CD8-positive, alpha-beta T cell (primary cell): ENCODE measurements at regions of chr1 and their contacts with region 1.

Region 1: GRCh38 chr1:86913896-86914634 is at the start of gene SELENOF:
- DNase-seq: peak; percentile 97 to 100 (median 99)
- ATAC-seq: peak; percentile 85
- H3K4me3 ChIP-seq: peak within 1 kb of the TSS; percentile 91 to 99
- H3K4me3 Mint-ChIP-seq: no peak within 1 kb of the TSS
- H3K27ac ChIP-seq: peak within 1 kb of the TSS; percentile 76 to 99
- H3K27ac Mint-ChIP-seq: no peak within 1 kb of the TSS
- H3K4me1 ChIP-seq: peaks cover 35% of the 10 kb centered on the region
- H3K4me1 Mint-ChIP-seq: peaks cover 50% of the 10 kb centered on the region
- H3K27me3 ChIP-seq: no peaks in the 10 kb centered on the region
- H3K27me3 Mint-ChIP-seq: no peaks in the 10 kb centered on the region
- CTCF ChIP-seq: no peak
- total RNA-seq, gene SELENOF: 74.5 to 78.6 TPM

Region 2: DNA sequence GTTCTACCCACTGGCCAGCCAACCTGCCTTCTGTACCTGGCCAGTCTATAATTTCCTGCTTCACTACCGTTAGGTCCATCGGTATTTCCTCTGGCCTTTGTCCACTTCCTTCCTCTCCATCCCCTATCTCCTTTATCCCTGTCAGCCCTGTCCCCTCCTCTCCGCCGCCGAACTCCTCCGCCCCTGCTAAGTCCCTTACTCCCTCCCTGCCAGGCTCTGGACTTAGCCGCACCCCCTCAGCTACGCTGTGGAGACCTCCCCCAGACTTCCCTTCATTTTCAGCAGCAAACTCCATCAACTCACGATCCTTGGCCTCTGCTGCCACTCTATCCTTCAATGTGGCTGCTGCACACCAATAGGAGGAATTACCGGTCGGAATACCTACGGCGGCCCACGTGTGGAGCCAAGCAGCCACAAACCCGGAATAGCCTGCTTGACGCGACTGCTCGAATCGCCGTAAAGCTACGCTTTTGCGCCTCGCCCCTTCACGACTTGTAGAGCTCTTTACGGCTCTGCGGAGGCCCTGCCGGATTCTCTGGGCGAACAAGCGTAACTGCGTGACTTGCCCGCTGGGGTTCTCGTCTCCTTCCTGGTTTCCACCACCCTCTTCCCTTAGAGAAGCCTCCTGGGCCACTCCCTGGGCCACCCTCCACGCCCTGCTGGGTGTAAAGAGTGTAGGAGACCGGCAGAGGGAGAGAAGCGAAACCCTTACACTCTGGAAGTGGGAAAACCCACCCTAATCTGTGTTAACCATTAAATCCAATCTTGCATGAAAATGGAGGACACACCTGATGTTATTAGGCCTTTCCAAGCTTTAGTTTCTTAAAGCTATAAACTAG is 1205.9 kb before region 1 on chr1 and contains the start of gene ZNHIT6:
- CTCF ChIA-PET with region 1: no interaction called
- POLR2A ChIA-PET with region 1: no interaction called
- intact Hi-C with region 1: loop called (anchors 2 to 5 kb)
- DNase-seq: peak; percentile 72 to 95 (median 84)
- ATAC-seq: peak; percentile 95
- H3K4me3 ChIP-seq: peak within 1 kb of the TSS; percentile 89 to 93
- H3K4me3 Mint-ChIP-seq: no peak within 1 kb of the TSS
- H3K27ac ChIP-seq: peak within 1 kb of the TSS; percentile 67 to 79
- H3K27ac Mint-ChIP-seq: no peak within 1 kb of the TSS
- H3K4me1 ChIP-seq: peaks cover 17% of the 10 kb centered on the region
- H3K4me1 Mint-ChIP-seq: peaks cover 30% of the 10 kb centered on the region
- H3K27me3 ChIP-seq: no peaks in the 10 kb centered on the region
- H3K27me3 Mint-ChIP-seq: no peaks in the 10 kb centered on the region
- CTCF ChIP-seq: no peak
- total RNA-seq, gene ZNHIT6: 14.4 to 15.3 TPM

Region 3: DNA sequence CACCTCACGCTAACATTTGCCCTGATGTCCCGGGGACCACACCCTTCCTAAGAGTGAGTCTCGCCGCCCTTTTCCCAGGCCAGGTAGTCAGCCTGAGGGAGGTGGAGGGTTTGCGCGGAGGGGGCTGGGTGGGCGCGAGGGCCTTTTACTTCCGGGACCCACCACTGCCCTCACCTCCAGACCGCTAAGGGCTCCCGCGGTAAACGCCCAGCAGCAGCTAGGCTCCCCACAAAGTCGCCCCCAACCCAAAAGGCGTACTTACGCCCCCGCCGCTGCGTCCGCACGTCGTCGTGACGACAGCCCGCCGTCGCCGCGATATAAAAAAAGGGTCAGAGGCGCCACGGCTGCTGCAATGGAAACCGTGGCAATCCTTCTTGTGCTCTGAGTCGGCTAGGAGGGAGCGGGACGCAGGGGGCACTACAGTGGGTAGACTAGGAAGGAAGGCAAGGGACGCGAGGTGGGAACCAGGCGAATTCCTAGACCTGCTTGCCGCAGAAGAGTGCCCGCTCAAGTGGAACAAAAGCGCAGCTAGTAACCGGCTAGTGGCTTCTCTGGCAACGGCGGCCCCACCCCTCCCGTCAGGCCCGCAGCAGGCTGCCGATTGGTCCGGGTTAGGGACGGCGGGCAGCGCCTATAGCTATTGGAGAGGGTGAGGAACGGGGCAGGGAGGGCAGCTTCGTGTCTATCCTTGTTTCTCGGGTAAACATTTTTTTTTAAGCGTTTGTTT is 518.1 kb before region 1 on chr1 and contains the start of gene ODF2L:
- CTCF ChIA-PET with region 1: no interaction called
- POLR2A ChIA-PET with region 1: interaction called, 7 read pairs
- intact Hi-C with region 1: loop called (anchors 1 kb)
- DNase-seq: peak; percentile 74 to 91 (median 89)
- ATAC-seq: peak; percentile 98
- H3K4me3 ChIP-seq: peak within 1 kb of the TSS; percentile 91 to 97
- H3K4me3 Mint-ChIP-seq: peak within 1 kb of the TSS; percentile 99
- H3K27ac ChIP-seq: peak within 1 kb of the TSS; percentile 85 to 91
- H3K27ac Mint-ChIP-seq: peak within 1 kb of the TSS; percentile 97
- H3K4me1 ChIP-seq: peaks cover 16% of the 10 kb centered on the region
- H3K4me1 Mint-ChIP-seq: peaks cover 53% of the 10 kb centered on the region
- H3K27me3 ChIP-seq: no peaks in the 10 kb centered on the region
- H3K27me3 Mint-ChIP-seq: no peaks in the 10 kb centered on the region
- CTCF ChIP-seq: no peak
- total RNA-seq, gene ODF2L: 49.3 to 49.6 TPM

Region 4: DNA sequence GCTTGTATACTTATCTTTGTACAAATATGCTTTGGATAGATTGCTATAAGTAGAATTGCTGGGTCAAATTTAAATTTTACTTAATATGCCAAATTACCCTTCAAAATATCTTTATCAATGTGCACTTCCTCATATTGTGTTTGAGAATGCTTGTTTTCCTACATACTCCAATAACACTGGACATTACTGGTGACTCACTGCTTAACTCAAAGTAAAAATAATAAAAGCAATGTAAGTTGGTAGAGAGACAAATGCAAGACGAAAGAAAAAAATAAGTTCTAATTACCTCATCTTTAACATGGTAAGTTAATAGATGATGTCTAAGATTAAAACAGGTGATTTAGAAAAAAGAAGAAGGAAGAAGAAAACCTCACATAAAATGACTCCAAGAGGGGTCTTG is 217.5 kb before region 1 on chr1:
- CTCF ChIA-PET with region 1: no interaction called
- POLR2A ChIA-PET with region 1: no interaction called
- intact Hi-C with region 1: no loop called
- DNase-seq: no peak
- ATAC-seq: no peak
- H3K4me3 ChIP-seq: no peak overlapping the region
- H3K4me3 Mint-ChIP-seq: no peak overlapping the region
- H3K27ac ChIP-seq: no peak overlapping the region
- H3K27ac Mint-ChIP-seq: no peak overlapping the region
- H3K4me1 ChIP-seq: no peaks in the 10 kb centered on the region
- H3K4me1 Mint-ChIP-seq: peaks cover 2% of the 10 kb centered on the region
- H3K27me3 ChIP-seq: no peaks in the 10 kb centered on the region
- H3K27me3 Mint-ChIP-seq: no peaks in the 10 kb centered on the region
- CTCF ChIP-seq: no peak

Region 5: GRCh38 chr1:86833461-86834215 is 80.4 kb before region 1 on chr1:
- CTCF ChIA-PET with region 1: interaction called, 6 read pairs
- POLR2A ChIA-PET with region 1: no interaction called
- intact Hi-C with region 1: loop called in 1 of 2 experiments (anchors 5 kb)
- DNase-seq: peak; percentile 4 to 76 (median 53)
- ATAC-seq: peak; percentile 72
- H3K4me3 ChIP-seq: no peak overlapping the region
- H3K4me3 Mint-ChIP-seq: no peak overlapping the region
- H3K27ac ChIP-seq: no peak overlapping the region
- H3K27ac Mint-ChIP-seq: no peak overlapping the region
- H3K4me1 ChIP-seq: no peaks in the 10 kb centered on the region
- H3K4me1 Mint-ChIP-seq: peaks cover 4% of the 10 kb centered on the region
- H3K27me3 ChIP-seq: no peaks in the 10 kb centered on the region
- H3K27me3 Mint-ChIP-seq: no peaks in the 10 kb centered on the region
- CTCF ChIP-seq: peak; percentile 64

Region 6: DNA sequence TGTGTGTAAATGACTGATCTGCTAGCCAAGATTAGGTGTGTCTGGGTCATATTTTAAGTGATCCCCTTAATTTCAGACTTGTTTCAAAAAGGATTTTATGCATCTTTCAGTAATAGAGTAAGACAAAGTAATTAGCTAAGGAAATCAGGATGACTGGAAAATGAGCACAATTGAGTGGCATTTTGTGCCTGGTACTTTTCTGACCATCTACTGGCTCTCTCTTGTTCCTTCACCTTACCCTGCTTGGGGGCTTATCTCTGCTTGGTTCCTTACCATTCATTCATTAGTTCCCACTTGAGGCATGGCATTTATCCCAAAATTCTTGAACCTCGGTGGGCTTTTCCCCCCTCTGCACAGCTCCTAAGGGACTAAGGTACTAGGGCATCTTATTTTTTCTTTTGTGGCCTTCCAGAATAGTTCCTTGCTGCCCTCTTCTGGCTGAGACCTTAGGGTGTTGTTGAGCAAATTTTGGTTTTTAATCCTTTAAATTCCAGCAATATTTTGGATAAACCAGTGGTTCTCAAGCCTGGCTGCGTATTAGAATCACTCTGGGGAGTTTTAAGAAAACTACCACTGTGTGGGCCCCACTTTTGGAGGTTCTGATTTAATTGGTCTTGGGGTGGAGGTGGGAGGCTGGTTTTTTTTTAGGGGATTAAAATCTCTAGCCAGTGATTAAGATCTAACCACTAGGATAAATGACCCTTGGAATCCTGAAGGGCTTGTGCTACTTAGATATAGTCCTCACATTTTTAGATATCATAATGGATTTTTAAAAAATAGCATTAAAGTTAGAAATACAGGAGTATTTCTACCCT is 51.2 kb after region 1 on chr1:
- CTCF ChIA-PET with region 1: interaction called, 6 read pairs
- POLR2A ChIA-PET with region 1: no interaction called
- intact Hi-C with region 1: loop called in 1 of 2 experiments (anchors 5 kb)
- DNase-seq: peak in 4 of 9 experiments; percentile 13 to 53 (median 31)
- ATAC-seq: no peak
- H3K4me3 ChIP-seq: no peak overlapping the region
- H3K4me3 Mint-ChIP-seq: no peak overlapping the region
- H3K27ac ChIP-seq: no peak overlapping the region
- H3K27ac Mint-ChIP-seq: no peak overlapping the region
- H3K4me1 ChIP-seq: no peaks in the 10 kb centered on the region
- H3K4me1 Mint-ChIP-seq: no peaks in the 10 kb centered on the region
- H3K27me3 ChIP-seq: no peaks in the 10 kb centered on the region
- H3K27me3 Mint-ChIP-seq: no peaks in the 10 kb centered on the region
- CTCF ChIP-seq: peak; percentile 52

Region 7: DNA sequence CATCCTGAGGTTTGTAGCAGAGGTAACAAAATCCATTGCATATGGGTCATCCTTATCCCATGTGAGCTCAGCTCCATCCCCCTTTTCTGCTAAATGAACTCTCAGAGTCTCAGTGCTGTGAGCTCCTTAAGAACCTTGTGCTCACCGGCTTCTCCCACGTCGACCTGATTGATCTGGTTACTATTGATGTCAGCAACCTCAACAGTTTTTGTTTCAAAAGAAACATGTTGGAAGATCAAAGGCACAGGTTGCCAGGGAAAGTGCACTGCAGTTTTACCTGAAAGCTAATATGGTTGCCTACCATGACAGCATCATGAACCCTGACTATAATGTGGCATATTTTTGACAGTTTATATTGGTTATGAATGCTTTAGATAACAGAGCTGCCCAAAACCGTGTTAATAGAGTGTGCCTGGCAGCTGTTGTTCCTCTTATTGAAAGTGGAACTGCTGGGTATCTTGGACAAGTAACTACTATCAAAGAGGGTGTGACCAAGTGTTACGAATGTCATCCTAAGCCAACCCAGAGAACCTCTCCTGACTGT is 131.8 kb after region 1 on chr1:
- CTCF ChIA-PET with region 1: no interaction called
- POLR2A ChIA-PET with region 1: no interaction called
- intact Hi-C with region 1: loop called (anchors 1 to 5 kb)
- DNase-seq: peak in 7 of 9 experiments; percentile 1 to 85 (median 56)
- ATAC-seq: peak; percentile 65
- H3K4me3 ChIP-seq: no peak overlapping the region
- H3K4me3 Mint-ChIP-seq: peak overlapping the region; percentile 63
- H3K27ac ChIP-seq: peak overlapping the region in 1 of 2 experiments; percentile 43
- H3K27ac Mint-ChIP-seq: peak overlapping the region; percentile 91
- H3K4me1 ChIP-seq: peaks cover 21% of the 10 kb centered on the region
- H3K4me1 Mint-ChIP-seq: peaks cover 55% of the 10 kb centered on the region
- H3K27me3 ChIP-seq: no peaks in the 10 kb centered on the region
- H3K27me3 Mint-ChIP-seq: no peaks in the 10 kb centered on the region
- CTCF ChIP-seq: no peak

Region 8: GRCh38 chr1:88683541-88684481 is 1769.7 kb after region 1 on chr1 and contains the start of gene PKN2:
- CTCF ChIA-PET with region 1: no interaction called
- POLR2A ChIA-PET with region 1: interaction called, 3 read pairs
- intact Hi-C with region 1: loop called (anchors 1 to 2 kb)
- DNase-seq: peak; percentile 92 to 100 (median 98)
- ATAC-seq: peak; percentile 93
- H3K4me3 ChIP-seq: peak within 1 kb of the TSS; percentile 51 to 85
- H3K4me3 Mint-ChIP-seq: peak within 1 kb of the TSS; percentile 91
- H3K27ac ChIP-seq: peak within 1 kb of the TSS; percentile 94
- H3K27ac Mint-ChIP-seq: peak within 1 kb of the TSS; percentile 96
- H3K4me1 ChIP-seq: peaks cover 32% of the 10 kb centered on the region
- H3K4me1 Mint-ChIP-seq: peaks cover 34% of the 10 kb centered on the region
- H3K27me3 ChIP-seq: no peaks in the 10 kb centered on the region
- H3K27me3 Mint-ChIP-seq: no peaks in the 10 kb centered on the region
- CTCF ChIP-seq: peak; percentile 16
- total RNA-seq, gene PKN2: 42.3 to 43.7 TPM